Mammary epithelial cell (primary cell): ENCODE measurements at regions of chr14 and their contacts with region 1.

Region 1: GRCh38 chr14:49862089-49862673 is 9.6 kb upstream of the NEMF start:
- DNase-seq: peak; percentile 79
- H3K4me3 ChIP-seq: peak overlapping the region; percentile 72 to 87 (median 82)
- H3K27ac ChIP-seq: peak overlapping the region; percentile 94
- H3K4me1 ChIP-seq: peaks cover 13% of the 10 kb centered on the region
- H3K27me3 ChIP-seq: no peaks in the 10 kb centered on the region
- CTCF ChIP-seq: peak; percentile 100

Region 2: GRCh38 chr14:49774106-49774505 is 88.1 kb before region 1 on chr14:
- CTCF ChIA-PET with region 1: no interaction called
- dilution Hi-C with region 1: no loop called
- in situ Hi-C with region 1: no loop called
- intact Hi-C with region 1: no loop called
- DNase-seq: no peak
- H3K4me3 ChIP-seq: no peak overlapping the region
- H3K27ac ChIP-seq: no peak overlapping the region
- H3K4me1 ChIP-seq: peaks cover 12% of the 10 kb centered on the region
- H3K27me3 ChIP-seq: no peaks in the 10 kb centered on the region
- CTCF ChIP-seq: no peak

Region 3: GRCh38 chr14:49946320-49947141 is 84.3 kb after region 1 on chr14:
- CTCF ChIA-PET with region 1: no interaction called
- dilution Hi-C with region 1: loop called (anchors 5 kb)
- in situ Hi-C with region 1: no loop called
- intact Hi-C with region 1: loop called (anchors 1 kb)
- DNase-seq: peak; percentile 72
- H3K4me3 ChIP-seq: no peak overlapping the region
- H3K27ac ChIP-seq: no peak overlapping the region
- H3K4me1 ChIP-seq: peaks cover 30% of the 10 kb centered on the region
- H3K27me3 ChIP-seq: no peaks in the 10 kb centered on the region
- CTCF ChIP-seq: no peak

Region 4: GRCh38 chr14:50038398-50039119 is 176.4 kb after region 1 on chr14:
- CTCF ChIA-PET with region 1: interaction called, 5 read pairs
- dilution Hi-C with region 1: no loop called
- in situ Hi-C with region 1: no loop called
- intact Hi-C with region 1: loop called (anchors 1 kb)
- DNase-seq: peak; percentile 100
- H3K4me3 ChIP-seq: no peak overlapping the region
- H3K27ac ChIP-seq: peak overlapping the region; percentile 97
- H3K4me1 ChIP-seq: peaks cover 58% of the 10 kb centered on the region
- H3K27me3 ChIP-seq: no peaks in the 10 kb centered on the region
- CTCF ChIP-seq: peak; percentile 8 to 16

Region 5: DNA sequence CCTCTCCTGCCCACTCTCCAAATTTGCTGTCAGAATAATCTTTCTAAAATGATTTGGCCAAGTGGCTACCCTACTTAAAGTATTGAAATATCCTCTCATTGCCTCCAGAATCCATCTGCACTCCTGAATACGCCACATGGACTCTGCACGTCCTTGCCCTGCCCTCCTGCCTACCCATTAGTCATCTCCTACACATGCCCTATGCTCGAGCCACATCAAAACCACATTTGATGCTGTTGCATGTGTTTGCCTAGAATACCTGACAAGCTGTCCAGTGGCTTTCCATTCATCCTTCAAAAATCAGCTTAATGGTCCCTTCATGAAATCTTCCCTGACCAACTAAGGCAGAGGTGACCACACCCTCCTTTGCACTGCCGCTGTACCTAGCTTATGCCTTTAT is 237.2 kb after region 1 on chr14:
- CTCF ChIA-PET with region 1: interaction called, 3 read pairs
- dilution Hi-C with region 1: loop called (anchors 5 kb)
- in situ Hi-C with region 1: loop called in 1 of 2 experiments (anchors 5 kb)
- intact Hi-C with region 1: no loop called
- DNase-seq: peak; percentile 86
- H3K4me3 ChIP-seq: no peak overlapping the region
- H3K27ac ChIP-seq: peak overlapping the region; percentile 23
- H3K4me1 ChIP-seq: peaks cover 16% of the 10 kb centered on the region
- H3K27me3 ChIP-seq: no peaks in the 10 kb centered on the region
- CTCF ChIP-seq: no peak

Region 6: GRCh38 chr14:50260511-50260910 is 398.3 kb after region 1 on chr14:
- CTCF ChIA-PET with region 1: interaction called, 3 read pairs
- dilution Hi-C with region 1: no loop called
- in situ Hi-C with region 1: no loop called
- intact Hi-C with region 1: loop called (anchors 5 kb)
- DNase-seq: peak; percentile 22
- H3K4me3 ChIP-seq: no peak overlapping the region
- H3K27ac ChIP-seq: no peak overlapping the region
- H3K4me1 ChIP-seq: no peaks in the 10 kb centered on the region
- H3K27me3 ChIP-seq: no peaks in the 10 kb centered on the region
- CTCF ChIP-seq: peak; percentile 42 to 54